ENCODE measurements at regions of chr18 and their contacts with region 1.

Region 1: DNA sequence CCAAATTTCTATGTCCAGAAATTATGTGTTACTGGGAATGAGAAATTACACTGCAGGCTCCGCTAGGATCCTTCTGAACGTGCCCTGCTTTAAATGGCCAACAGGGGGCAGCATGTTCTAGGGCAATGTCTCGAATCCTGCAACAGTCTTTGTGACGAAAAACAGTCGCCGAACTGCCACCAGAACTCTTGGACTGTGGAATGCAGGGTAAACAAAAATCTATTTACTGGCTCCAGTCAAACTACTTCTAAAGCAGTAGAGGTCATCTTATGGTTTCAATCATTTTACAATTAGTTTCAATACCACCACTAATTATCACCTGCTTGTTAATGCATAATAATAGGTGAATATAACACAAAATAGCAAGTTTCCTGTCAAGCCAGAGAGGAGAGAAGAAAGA is 9.8 kb upstream of the ZNF397 start:
- DNase-seq: peak; percentile 38 to 85
- H3K4me3 ChIP-seq: peak overlapping the region in 1 of 4 experiments; percentile 31; a peak in 1 of 8 replicates
- H3K27ac ChIP-seq: no peak overlapping the region
- H3K4me1 ChIP-seq: no peaks in the 10 kb centered on the region
- H3K27me3 ChIP-seq: no peaks in the 10 kb centered on the region
- CTCF ChIP-seq: peak; percentile 80 to 89 (median 89)
- EP300 ChIP-seq: no peak
- POLR2A ChIP-seq: no peak
- RAD21 ChIP-seq: peak; percentile 87 to 89

Region 2: DNA sequence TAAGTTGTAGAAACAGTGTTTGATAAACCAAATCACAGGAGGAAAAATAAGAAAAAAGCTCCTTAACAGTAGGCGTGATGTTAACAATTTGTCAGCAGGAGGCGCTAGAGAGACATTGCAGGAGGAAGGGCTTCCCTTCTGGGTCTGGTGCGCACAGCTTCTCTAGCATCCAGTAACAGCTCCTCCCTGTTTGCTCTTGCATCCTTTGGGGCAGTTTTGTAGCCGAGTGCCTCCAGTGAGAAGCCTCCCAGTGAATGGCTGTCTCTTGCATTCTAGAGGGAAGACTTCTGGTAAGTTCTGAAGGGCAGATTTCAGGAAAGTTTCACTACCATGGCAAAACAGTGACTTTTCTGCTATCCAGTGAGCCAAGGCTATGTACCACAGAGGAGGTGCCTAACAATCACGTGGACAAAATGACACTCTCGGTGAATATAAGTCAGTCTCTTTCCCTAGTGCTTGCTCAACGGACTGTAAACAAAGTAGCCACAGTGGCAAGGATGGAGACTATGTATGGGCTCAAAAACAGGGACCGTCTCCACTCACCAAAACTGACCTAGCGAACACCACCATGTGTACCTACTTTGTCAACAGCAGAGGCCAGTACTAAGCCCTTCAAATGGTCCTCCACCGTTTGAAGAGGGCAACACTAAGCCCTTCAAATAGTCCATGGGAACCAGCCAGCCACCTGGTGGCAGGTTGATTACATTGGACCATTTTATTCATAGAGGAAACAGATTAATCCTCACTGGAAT is 155.7 kb after region 1 on chr18:
- CTCF ChIA-PET with region 1: interaction called, 13 read pairs
- POLR2A ChIA-PET with region 1: no interaction called
- DNase-seq: peak; percentile 36 to 63
- H3K4me3 ChIP-seq: no peak overlapping the region
- H3K27ac ChIP-seq: no peak overlapping the region
- H3K4me1 ChIP-seq: no peaks in the 10 kb centered on the region
- H3K27me3 ChIP-seq: no peaks in the 10 kb centered on the region
- CTCF ChIP-seq: peak; percentile 59 to 92 (median 85)
- EP300 ChIP-seq: no peak
- POLR2A ChIP-seq: no peak
- RAD21 ChIP-seq: peak; percentile 88 to 90